Activated CD4-positive, alpha-beta T cell treated with anti-CD3 and anti-CD28 coated beads, Interleukin-2, amount 10 ng/mL, durations not matched to agents 24 days and 14 days (primary cell): ENCODE measurements at regions of chr7 and their contacts with region 1.

Region 1: DNA sequence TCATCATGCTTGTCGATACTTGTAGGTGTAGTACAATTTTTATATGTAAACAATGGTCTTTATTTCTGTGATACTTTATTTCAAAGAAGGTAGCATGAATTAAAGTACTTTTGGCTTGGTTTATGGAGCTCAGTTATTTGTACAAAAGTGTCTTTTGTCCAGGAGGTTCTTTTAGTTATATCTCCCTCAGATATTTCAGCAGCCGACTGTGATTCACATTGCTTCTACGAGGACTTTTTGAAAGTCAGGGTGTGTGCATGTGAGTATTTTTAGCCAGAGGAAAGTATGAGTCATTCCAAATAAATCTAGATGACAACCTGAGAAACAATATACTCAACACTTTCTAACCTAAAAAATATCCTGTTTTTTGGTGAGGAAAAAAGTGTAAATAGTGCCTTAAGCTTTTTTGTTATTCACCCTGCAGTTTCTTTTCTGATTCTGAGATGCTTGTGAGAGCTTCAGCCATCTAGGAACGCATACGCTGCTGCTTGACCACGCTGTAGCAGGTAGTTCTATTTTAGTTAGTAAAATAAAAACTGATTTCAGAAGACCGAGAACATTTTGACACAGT is 595 bp upstream of the SUN1 start:
- DNase-seq: peak; percentile 73
- H3K4me3 Mint-ChIP-seq: peak overlapping the region; percentile 81
- H3K27ac Mint-ChIP-seq: peak overlapping the region; percentile 96
- H3K4me1 Mint-ChIP-seq: peaks cover 36% of the 10 kb centered on the region
- H3K27me3 Mint-ChIP-seq: no peaks in the 10 kb centered on the region

Region 2: DNA sequence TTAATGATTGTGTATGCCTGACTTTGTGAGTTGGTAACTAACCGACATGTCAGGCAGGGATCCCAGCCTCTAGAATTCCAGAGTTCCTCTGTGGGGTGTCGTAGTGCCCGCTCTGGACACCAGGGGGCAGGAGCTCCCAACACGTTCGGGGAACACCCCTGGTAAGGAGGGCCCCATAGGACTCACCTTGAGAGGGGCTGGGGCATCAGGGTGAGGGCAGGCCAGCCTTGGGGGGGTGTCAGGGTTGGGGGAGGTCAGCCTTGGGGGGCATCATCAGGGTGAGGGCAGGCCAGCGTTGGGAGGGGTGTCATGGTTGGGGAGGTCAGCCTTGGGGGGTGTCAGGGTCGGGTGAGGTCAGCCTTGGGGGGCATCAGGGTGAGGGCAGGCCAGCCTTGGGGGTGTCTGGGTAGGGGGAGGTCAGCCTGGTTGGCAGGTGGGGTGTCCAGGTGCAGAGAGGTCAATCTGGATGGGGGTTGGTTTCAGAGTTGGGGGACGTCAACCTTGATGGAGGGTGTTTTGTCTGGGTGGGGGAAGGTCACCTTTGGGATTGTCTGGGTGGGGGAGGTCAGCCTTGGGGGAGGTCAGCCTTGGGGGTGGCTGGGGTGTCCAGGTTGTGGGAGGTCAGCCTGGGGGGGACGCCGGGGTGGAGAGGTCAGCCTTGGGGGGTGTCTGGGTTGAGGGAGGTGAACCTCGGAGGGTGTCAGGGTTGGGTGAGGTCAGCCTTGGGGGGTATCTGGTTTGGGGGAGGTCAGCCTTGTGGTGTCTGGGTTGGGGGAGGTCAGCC is 45.0 kb before region 1 on chr7:
- intact Hi-C with region 1: loop called (anchors 10 kb)
- DNase-seq: peak; percentile 90
- H3K4me3 Mint-ChIP-seq: no peak overlapping the region
- H3K27ac Mint-ChIP-seq: no peak overlapping the region
- H3K4me1 Mint-ChIP-seq: peaks cover 3% of the 10 kb centered on the region
- H3K27me3 Mint-ChIP-seq: no peaks in the 10 kb centered on the region

Region 3: GRCh38 chr7:816300-816750 is 15.4 kb before region 1 on chr7:
- intact Hi-C with region 1: loop called (anchors 1 kb)
- DNase-seq: peak; percentile 99
- H3K4me3 Mint-ChIP-seq: peak overlapping the region; percentile 76
- H3K27ac Mint-ChIP-seq: no peak overlapping the region
- H3K4me1 Mint-ChIP-seq: peaks cover 48% of the 10 kb centered on the region
- H3K27me3 Mint-ChIP-seq: peaks cover 25% of the 10 kb centered on the region

Region 4: GRCh38 chr7:1247527-1248059 is 415.9 kb after region 1 on chr7:
- intact Hi-C with region 1: no loop called
- DNase-seq: peak; percentile 57
- H3K4me3 Mint-ChIP-seq: no peak overlapping the region
- H3K27ac Mint-ChIP-seq: no peak overlapping the region
- H3K4me1 Mint-ChIP-seq: peaks cover 2% of the 10 kb centered on the region
- H3K27me3 Mint-ChIP-seq: peaks cover 57% of the 10 kb centered on the region